Sciatic nerve (tissue), 2 donors: ENCODE measurements at regions of chr14 and their contacts with region 1.

Region 1: DNA sequence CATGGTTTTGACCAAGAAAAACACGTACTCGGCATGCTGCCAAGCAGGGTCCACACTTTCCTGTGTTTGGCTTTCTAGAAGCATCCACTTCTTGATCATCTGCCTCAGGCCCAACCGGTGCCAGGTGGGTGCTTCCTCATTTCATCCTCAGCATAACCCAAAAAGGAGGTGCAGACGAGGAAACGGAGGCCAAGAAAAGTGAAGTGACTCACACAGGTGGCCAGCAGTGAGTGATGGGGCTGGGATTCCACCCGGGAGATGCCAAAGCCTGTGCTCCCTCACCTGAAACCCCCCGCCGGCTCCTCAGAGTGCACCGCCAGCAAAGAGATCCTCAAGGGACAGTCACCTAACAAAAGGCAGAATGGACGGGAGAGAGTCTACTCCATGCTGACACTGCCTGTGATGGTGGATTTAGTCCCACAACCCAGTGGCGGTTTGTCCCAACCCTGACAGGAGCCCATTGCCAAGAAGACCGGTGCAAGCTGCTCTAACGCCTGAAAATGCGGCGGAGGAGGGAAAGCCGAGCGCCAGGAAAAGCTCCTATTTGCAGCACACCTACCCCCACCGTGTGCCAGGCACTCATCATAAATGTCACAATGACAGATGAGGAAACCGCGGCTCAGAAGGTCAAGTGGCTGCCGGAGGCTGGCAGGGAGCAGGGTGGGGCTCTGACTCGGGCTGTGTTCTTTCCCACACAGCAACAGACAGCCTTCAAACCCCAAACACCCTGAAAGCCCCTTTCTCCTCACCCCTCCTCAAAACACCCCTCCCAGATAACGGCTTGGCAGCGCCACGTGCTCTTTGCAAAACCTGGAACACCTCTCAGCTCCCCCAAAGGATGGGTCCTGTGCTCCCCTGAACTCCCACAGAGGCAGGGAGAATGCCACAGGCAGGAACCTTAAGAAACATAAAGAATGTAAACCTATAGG is 18.8 kb downstream of the BCL11B start:
- DNase-seq: no peak
- ATAC-seq: no peak

Region 2: GRCh38 chr14:97446087-97446486 is 1807.1 kb before region 1 on chr14:
- intact Hi-C with region 1: loop called (anchors 10 kb)
- DNase-seq: no peak
- ATAC-seq: no peak

Region 3: GRCh38 chr14:100673036-100673806 is 1420.0 kb after region 1 on chr14:
- intact Hi-C with region 1: no loop called
- DNase-seq: no peak
- ATAC-seq: no peak